MCF 10A (cell line): ENCODE measurements at regions of chr4 and their contacts with region 1.

Region 1: GRCh38 chr4:73620115-73620792 is at the start of gene RASSF6:
- DNase-seq: peak; percentile 63
- H3K4me3 Mint-ChIP-seq: peak within 1 kb of the TSS; percentile 84
- H3K27ac Mint-ChIP-seq: peak within 1 kb of the TSS; percentile 47
- H3K4me1 Mint-ChIP-seq: peaks cover 19% of the 10 kb centered on the region
- H3K27me3 Mint-ChIP-seq: no peaks in the 10 kb centered on the region
- CTCF ChIP-seq: no peak
- total RNA-seq, gene RASSF6: 1.6 and 2.4 TPM in 2 replicates

Region 2: GRCh38 chr4:73477176-73477575 is 143.1 kb before region 1 on chr4:
- CTCF ChIA-PET with region 1: no interaction called
- POLR2A ChIA-PET with region 1: no interaction called
- intact Hi-C with region 1: no loop called
- DNase-seq: no peak
- H3K4me3 Mint-ChIP-seq: no peak overlapping the region
- H3K27ac Mint-ChIP-seq: no peak overlapping the region
- H3K4me1 Mint-ChIP-seq: no peaks in the 10 kb centered on the region
- H3K27me3 Mint-ChIP-seq: peaks cover 18% of the 10 kb centered on the region
- CTCF ChIP-seq: no peak

Region 3: DNA sequence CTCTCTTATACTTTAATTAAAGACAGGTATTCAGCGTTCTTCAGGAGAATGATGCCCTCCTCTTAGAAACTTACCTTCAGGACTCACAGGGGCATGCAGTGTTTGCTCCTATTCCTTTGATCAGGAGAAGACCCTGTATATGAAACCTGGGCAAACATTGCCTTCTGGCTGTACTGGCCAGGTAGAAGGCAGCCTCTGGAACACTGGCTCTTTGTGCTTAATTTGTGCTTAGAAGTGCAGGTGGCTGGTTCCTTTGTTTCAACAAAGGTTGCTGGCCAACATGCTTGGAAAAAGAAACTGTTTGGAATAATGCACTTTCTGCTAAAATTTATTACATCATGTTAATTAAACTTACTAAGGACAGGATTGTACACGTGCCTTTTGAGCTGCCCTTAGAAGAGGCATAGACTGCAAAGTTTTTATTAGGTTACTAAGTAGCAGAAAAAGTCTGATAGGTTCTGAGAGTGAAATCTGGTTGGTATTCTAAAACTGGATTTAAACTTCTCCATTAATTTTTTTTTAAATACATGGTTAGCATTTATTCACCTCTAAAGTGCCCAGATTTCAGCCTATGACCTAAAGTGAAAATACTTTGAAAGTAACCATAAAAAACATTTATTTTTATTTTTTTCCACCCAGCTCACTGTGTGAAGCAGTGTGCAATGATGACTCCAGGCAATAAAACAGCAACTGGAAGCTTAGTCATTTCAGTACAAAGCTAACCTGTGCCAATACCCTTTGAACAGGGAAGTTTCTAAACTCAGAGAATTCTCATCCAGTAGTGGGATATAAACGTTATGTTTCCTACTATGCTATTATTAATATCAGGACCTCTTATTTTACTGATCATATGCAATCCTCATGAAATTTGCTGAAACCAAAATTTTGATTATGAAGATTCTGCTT is 11.3 kb before region 1 on chr4:
- CTCF ChIA-PET with region 1: interaction called, 3 read pairs
- POLR2A ChIA-PET with region 1: interaction called, 47 read pairs
- intact Hi-C with region 1: no loop called
- DNase-seq: peak; percentile 71
- H3K4me3 Mint-ChIP-seq: no peak overlapping the region
- H3K27ac Mint-ChIP-seq: peak overlapping the region; percentile 6
- H3K4me1 Mint-ChIP-seq: peaks cover 50% of the 10 kb centered on the region
- H3K27me3 Mint-ChIP-seq: no peaks in the 10 kb centered on the region
- CTCF ChIP-seq: no peak